Psoas muscle (tissue), 8 donors: ENCODE measurements at regions of chr5 and their contacts with region 1.

Region 1: DNA sequence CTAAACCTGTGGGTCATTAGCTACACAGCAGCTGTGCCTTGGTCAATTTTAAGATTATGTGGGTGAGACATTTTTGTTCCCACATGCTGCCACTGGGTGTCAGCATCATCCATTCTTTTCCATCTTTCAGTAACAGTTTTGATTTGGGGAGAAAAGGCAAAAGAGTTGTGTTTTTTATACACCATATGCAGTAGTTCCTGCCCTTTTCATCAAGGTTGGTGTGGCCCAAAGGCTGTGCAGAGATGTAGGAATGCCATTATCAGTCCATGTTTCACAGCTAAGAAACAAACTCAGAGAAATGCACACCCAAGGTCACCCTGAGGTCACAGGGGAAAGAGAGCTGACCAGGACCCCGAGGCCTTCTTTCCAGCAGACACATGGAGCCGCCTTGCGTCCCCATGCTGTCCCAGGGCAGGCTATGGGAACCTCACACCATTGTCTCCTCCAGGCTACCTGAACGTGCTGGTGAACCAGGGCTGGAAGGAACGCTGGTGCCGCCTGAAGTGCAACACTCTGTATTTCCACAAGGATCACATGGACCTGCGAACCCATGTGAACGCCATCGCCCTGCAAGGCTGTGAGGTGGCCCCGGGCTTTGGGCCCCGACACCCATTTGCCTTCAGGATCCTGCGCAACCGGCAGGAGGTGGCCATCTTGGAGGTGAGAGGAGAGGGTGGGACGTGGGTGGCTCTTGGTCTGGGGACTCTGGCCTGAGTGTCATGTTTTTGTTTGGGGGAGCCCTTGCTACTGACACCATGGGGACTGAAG is 27.8 kb upstream of the GRPEL2 start:
- DNase-seq: no peak
- ATAC-seq: no peak
- H3K4me3 ChIP-seq: no peak overlapping the region
- H3K27ac ChIP-seq: no peak overlapping the region
- H3K4me1 ChIP-seq: peaks cover 42% of the 10 kb centered on the region
- H3K27me3 ChIP-seq: no peaks in the 10 kb centered on the region
- CTCF ChIP-seq: peak; percentile 55

Region 2: GRCh38 chr5:149367249-149367971 is 49.9 kb after region 1 on chr5:
- intact Hi-C with region 1: loop called in 1 of 2 experiments (anchors 2 kb)
- DNase-seq: no peak
- ATAC-seq: peak; percentile 24 to 67 (median 50)
- H3K4me3 ChIP-seq: no peak overlapping the region
- H3K27ac ChIP-seq: no peak overlapping the region
- H3K4me1 ChIP-seq: peaks cover 9% of the 10 kb centered on the region
- H3K27me3 ChIP-seq: no peaks in the 10 kb centered on the region
- CTCF ChIP-seq: peak; percentile 61

Region 3: DNA sequence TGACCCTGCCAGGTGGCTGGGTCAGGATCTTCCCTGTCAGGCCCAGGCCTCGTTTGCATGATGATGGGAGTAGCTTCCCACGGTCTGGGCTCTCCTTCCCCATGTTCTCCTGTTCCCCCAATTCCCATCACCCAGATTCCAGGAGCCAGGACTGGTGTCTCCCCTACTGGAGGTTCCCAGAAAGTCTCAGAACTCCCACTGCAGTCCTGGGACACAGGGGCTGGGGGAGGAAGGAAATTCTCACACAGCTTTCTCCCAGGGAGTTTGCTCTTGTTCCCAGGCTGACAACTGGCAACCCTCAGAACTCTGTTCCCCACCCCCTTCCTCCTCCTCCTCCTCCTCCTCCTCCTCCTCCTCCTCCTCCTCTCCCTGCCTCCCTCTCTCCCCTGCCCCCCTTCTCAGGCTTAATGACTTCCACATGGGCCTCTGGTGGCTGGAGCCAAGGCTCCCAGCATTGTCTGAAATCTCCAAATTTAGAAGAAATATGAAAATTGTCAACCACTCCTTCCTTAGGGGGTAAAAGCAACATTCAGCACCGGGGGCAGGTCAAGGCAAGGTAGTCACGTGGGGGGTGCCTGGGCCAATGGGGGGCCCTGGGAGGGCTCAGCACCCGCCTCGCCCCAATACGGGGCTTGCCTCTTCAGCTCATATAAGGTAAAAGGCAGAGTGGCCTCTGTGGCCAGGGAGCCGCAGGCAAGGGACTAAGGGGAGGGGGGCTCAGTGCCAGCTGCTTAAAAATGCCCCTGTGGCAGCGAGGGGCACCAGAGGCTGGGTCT is 88.9 kb after region 1 on chr5:
- intact Hi-C with region 1: no loop called
- DNase-seq: peak in 1 of 2 donors; percentile 68
- ATAC-seq: peak; percentile 43 to 61 (median 46)
- H3K4me3 ChIP-seq: peak overlapping the region; percentile 59
- H3K27ac ChIP-seq: peak overlapping the region; percentile 66
- H3K4me1 ChIP-seq: no peaks in the 10 kb centered on the region
- H3K27me3 ChIP-seq: no peaks in the 10 kb centered on the region
- CTCF ChIP-seq: no peak

Region 4: DNA sequence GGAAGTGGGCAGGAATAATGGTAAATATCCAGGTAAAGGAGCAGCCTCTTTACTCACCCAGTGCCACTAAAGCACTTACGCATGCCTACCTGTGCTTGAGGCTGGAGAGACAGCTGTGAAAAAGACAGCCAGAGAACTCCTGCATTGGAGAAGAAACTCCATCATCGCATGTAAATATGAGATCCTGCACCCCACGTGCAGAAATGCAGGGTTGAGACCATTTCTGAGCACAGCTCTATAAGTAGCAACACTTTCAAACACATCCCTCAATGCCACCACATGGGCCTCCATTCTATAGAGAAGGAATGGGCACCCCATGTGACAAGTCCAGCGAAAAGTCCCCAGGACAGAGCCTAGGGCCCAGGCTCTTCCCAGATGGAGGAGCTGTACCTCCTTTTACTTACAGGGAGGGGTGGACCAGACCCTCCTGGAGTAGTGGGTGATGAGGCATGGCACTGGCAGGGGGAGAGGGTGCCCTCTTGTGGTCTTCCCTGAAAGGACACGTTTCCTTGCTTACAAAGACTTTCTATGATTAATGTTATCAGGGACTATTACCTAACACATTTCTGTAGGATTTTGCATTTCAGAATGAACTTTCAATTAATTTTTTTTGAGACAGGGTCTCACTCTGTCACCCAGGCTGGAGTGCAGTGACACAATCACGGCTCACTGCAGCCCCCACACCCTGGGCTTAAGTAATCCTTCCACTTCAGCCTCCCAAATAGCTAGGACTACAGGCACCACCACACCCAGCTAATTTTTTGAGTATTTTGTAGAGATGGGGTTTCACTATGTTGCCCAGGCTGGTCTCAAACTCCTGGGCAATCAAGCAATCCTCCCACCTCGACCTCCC is 116.9 kb after region 1 on chr5:
- intact Hi-C with region 1: loop called in 1 of 2 experiments (anchors 5 kb)
- DNase-seq: no peak
- ATAC-seq: peak; percentile 59 to 77 (median 66)
- H3K4me3 ChIP-seq: no peak overlapping the region
- H3K27ac ChIP-seq: no peak overlapping the region
- H3K4me1 ChIP-seq: peaks cover 8% of the 10 kb centered on the region
- H3K27me3 ChIP-seq: no peaks in the 10 kb centered on the region
- CTCF ChIP-seq: peak; percentile 86